BJ (cell line): ENCODE measurements at regions of chr1 and their contacts with region 1.

Region 1: DNA sequence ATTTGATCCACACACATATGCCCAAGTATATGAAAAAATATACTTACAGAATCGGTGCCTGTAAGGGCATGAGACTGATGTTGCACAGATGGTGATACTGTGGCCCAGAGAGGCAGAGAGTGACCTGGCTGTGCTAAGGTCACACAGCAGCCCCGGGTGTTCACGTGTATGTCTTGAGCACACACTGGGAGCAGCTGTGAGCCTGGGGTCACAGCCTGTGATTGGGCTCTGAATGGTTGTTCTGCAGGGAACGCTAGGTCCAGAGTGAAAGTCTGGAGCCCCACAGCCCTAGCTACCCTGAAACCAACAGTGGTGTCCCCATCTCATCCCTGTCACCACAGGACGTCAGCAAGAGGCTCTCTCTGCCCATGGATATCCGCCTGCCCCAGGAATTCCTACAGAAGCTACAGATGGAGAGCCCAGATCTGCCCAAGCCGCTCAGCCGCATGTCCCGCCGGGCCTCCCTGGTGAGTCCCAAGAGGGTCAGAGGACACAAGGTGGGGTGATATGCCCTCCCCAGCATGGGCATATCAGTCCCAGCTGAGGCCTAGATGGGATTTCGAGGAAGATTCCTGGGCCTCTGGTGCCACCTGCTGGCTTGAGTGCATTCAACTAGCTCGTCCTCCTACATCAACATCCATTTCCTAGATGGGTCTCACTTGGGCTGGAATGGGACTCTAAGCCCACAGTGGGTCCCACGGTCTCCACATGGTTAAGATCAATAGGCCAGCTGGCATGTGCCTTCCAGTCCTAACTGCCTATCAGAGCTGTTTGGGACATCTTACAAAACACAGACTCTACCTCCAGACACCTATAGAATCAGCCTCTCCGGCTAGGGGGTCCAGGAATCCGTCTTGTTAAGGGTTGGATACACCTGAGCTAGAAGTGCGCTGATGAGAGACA is 19.7 kb downstream of the CDK18 start:
- DNase-seq: no peak
- H3K4me3 ChIP-seq: no peak overlapping the region
- H3K27me3 ChIP-seq: peaks cover 8% of the 10 kb centered on the region
- CTCF ChIP-seq: peak; percentile 76

Region 2: DNA sequence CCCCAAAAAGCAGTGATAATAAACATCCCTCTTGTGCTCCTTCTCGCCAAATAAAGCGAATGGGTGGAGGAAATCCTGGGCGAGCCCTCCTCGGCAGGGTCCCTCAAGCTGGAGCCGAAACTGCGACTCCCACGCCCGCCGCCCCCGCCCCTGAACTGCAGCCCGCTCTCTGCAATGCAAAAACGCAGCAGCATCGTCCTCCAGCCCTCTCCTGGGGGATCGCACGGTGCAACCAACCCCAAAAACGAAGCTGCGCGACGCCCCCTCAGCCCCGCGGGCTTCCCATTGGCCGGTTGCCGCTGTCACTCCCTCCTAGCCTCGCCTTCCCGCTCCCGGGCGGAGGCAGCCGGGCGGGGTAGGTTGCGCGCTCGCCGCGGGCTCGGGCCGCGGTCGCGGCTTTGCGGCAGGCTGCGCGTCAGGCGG is 296.5 kb before region 1 on chr1 and contains the start of gene TMCC2:
- CTCF ChIA-PET with region 1: no interaction called
- POLR2A ChIA-PET with region 1: interaction called, 12 read pairs
- DNase-seq: no peak
- H3K4me3 ChIP-seq: peak within 1 kb of the TSS; percentile 71
- H3K27me3 ChIP-seq: peaks cover 2% of the 10 kb centered on the region
- CTCF ChIP-seq: 0 out of 2 replicates have a peak, but pooled peaks have one; percentile 8
- polyA plus RNA-seq, gene TMCC2: 2.4 and 3.4 TPM in 2 replicates

Region 3: GRCh38 chr1:205326812-205327466 is 197.2 kb before region 1 on chr1:
- CTCF ChIA-PET with region 1: interaction called, 35 read pairs
- POLR2A ChIA-PET with region 1: no interaction called
- DNase-seq: no peak
- H3K4me3 ChIP-seq: no peak overlapping the region
- H3K27me3 ChIP-seq: peaks cover 15% of the 10 kb centered on the region
- CTCF ChIP-seq: no peak

Region 4: DNA sequence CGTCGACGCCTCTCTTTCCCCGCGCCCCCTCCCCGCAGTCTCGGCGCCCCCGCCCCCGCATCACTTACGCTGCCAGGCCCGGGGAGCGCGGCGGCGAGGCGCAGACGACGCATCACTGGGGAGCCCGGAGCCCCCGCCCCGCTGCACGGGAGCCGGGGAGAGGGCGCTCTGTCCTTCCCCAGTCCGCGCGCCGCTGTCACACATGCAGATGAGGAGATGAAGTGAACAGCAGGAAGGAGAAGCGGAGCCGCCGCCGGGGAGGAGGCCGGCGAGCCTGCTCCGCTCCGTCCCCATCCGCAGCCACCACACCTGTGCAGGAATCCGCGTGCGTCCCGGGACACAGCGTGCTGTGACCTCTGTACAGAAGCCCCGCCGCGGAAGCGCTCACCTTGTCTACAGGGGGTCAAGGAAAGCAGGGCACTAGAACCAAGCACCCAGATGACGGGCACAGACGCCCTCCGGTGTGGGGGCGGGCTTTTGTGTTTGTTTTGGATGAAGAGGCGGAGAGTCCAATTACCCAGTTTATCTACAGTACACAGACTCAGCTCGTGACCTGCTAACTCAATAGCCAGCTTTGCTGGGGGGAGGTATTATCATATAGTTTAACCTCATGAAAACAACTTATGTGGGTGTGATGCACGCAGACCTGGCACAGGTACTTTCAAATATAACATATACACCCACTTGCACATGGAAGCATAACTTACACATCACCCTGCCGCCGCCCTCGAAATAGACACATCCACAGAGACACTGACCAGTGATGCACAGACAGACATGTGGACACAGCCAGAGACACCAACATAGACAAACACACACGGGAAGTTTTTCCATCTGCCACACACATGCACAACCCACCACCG is 179.8 kb before region 1 on chr1:
- CTCF ChIA-PET with region 1: interaction called, 22 read pairs
- POLR2A ChIA-PET with region 1: no interaction called
- DNase-seq: no peak
- H3K4me3 ChIP-seq: peak overlapping the region; percentile 14
- H3K27me3 ChIP-seq: peaks cover 51% of the 10 kb centered on the region
- CTCF ChIP-seq: no peak

Region 5: DNA sequence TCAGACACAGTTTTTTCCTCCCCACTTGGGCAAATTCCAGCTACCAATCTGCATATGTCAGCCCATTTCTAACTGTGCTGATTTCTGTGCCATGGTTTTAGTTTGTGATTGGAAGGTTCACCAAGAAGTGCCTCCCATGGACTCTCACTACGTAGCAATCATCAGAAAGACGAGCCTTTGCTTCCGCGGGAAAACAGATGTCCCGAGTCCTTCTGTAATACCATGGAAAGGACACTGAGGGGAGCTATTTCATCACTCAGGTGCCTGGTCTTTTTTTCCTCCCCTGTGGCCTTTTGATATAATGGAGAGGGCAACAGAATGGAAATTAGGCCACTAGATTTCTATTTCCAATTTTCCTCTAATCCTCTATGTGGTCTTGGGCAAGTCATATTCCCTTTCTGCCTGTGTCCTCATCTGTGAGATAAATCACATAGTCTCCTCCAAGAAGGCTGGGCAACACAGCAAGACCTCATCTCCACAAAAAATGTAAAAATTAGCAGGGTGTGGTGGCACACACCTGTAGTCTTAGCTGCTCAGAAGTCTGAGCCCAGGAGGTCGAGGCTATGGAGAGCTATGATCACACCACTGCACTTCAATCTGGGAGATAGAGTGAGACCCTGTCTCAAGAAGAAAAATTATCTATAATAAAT is 127.0 kb before region 1 on chr1:
- CTCF ChIA-PET with region 1: interaction called, 25 read pairs
- POLR2A ChIA-PET with region 1: no interaction called
- DNase-seq: no peak
- H3K4me3 ChIP-seq: no peak overlapping the region
- H3K27me3 ChIP-seq: no peaks in the 10 kb centered on the region
- CTCF ChIP-seq: peak; percentile 54

Region 6: DNA sequence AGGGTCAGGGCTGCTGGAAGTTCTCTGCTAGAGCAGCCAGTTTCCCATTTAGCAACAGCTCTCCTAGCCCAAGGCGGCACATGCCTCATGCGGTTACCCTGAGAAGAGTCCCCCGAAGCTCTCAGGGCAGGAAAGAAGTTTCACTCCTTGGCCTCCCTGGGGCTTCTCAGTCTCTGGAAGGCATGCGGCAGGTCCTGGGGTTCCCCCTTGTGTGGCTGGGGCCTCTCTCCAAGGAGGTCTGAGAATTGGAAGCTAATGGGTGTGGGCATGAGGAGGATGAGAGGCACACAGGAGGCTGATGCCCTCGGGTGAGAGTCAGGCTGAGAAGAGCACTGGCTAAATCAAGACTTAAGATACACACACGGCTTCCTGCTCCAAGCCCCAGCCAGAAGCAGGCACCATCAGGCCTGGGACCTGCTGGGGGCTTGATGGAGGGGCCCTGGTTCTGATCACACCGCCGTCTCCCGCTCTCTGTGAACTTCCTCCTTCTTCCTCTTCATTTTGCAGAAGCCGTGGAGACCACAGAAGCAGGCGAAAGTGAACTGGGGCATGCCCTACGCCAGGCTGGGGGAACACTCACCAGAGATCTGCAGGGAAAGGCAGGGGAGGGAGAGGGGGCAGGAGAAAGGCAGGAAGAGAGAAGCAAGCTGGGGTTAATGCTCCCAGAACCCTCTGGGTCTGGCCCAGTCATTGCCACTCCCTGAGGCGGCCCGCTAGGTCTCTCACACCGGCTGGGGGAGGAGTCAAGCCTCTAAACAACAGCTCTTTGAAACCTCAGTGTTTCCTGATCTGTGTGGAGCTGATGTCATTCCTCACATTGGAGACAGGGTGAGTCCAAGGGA is 83.4 kb before region 1 on chr1:
- CTCF ChIA-PET with region 1: no interaction called
- POLR2A ChIA-PET with region 1: no interaction called
- DNase-seq: no peak
- H3K4me3 ChIP-seq: no peak overlapping the region
- H3K27me3 ChIP-seq: peaks cover 36% of the 10 kb centered on the region
- CTCF ChIP-seq: no peak

Region 7: DNA sequence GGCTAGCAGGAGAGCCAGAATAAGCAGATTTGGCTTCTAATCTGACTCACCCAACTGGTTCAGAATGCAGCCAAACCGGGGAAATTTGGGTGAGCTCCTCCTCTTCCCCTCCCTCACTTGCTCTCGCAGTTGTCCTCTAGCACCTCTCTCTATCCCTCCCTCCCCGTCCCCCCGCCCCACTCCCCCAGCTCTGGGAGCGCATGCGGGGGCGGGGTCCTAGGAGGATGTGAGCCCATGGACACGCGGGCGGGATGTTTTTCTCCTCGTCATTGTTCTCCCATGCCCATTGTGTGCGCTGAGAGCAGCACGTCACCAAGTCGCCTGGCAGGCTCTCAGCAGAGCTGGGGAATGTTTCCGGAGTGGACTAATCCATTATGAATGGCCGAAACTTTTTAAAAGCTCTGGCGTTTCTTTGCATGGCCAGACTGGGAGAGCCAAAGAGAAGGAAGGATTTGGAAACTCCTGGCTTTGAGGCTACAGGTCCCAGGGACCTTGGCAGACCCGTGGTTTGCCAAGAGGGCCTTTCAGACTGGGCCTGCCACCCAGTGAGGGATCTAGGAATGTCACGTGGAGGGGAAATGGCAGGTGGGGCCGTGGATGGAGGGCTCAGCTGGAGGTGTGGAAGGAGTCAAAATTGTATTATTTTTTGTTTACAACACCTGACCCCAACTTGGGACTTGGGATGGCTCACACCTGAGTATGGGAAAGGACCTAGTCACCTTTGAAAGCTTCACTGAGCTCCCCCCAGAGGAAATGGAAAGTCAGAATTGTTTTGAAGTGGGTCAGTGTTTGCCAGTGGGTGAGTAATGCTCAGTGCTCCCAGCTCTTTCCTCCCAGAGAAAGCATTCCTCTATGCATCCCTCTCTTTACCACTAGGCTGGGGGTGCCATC is 19.5 kb after region 1 on chr1:
- CTCF ChIA-PET with region 1: interaction called, 14 read pairs
- POLR2A ChIA-PET with region 1: no interaction called
- DNase-seq: peak; percentile 46
- H3K4me3 ChIP-seq: peak overlapping the region; percentile 17
- H3K27me3 ChIP-seq: peaks cover 4% of the 10 kb centered on the region
- CTCF ChIP-seq: no peak

Region 8: GRCh38 chr1:205631727-205632373 is 107.7 kb after region 1 on chr1 and contains the start of gene ELK4:
- CTCF ChIA-PET with region 1: interaction called, 16 read pairs
- POLR2A ChIA-PET with region 1: no interaction called
- DNase-seq: peak; percentile 80
- H3K4me3 ChIP-seq: peak within 1 kb of the TSS; percentile 63
- H3K27me3 ChIP-seq: no peaks in the 10 kb centered on the region
- CTCF ChIP-seq: peak; percentile 78
- polyA plus RNA-seq, gene ELK4: 3.4 and 5.7 TPM in 2 replicates